Vagina (tissue), 2 donors: ENCODE measurements at regions of chr15 and their contacts with region 1.

Region 1: DNA sequence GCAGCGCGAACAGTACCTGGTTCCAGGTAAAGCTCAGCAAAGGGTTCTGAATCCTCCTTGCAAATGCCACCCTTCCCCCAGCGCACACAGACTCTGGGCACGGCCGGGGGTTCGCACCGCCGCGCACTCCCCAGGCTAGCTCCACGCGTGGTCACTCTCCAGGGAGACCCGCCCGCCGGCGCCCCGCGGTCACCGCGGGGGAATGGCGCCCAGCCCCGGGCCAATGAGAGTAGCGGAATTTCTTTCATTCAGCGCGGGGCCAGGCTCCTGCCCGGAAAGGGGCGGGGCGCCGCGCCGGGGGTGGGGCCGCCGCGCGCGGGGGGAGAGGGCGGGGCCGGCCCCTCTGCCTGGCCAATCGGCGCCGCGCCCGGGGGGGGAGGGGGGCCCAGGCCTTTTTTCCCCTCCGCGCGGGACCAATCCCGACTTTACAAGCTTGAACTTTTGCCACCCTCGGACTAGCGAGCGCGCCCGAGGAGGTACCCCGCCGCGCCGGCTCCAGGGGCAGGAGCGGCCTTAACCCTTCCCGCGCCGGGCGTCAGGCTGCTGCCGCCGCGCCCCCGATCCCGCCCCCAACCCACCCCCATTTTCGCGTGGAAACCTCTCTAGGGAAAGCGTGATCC is 1.1 kb upstream of the SMAD6 start:
- DNase-seq: peak in 1 of 2 donors; percentile 94
- H3K4me3 ChIP-seq: peak overlapping the region; percentile 53 to 84
- H3K27ac ChIP-seq: peak overlapping the region; percentile 82
- H3K4me1 ChIP-seq: peaks cover 33% of the 10 kb centered on the region
- H3K27me3 ChIP-seq: no peaks in the 10 kb centered on the region
- CTCF ChIP-seq: no peak
- POLR2A ChIP-seq: no peak

Region 2: DNA sequence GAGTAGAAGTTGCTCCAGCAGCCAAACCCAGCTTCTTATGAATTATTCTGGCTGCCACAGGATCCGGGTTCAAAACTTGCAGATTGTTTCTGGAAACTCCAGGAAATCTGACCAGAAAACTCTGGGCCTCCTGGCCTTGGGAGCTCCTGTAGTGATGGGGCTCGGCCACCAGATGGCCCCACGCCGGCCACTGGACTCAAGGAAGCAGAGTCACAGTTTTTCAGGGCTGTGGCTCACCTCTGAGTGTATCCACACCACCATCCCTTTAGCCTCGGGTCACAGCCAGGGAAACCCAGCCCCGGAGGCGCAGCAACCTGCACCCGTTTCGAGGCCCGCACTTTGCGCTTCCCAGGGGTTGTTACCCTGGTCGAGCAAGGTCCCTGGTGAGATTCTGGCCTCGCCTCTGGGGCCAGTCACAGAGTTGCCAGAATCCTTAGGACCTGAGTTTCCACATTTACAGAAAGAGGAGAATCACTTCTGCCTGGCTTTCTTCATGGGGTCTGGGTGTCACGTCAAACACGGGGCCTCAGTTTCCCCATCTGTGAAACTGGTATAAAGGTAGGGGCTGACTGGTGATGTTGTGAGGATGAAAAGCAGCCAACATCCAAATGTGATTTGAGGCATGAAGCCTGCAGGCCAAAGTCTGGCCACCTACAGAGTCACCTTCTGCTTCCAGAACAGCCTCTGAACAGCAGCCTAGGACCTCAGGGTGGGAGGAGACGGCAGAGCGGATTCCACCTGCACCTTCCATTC is 81.6 kb before region 1 on chr15:
- intact Hi-C with region 1: loop called (anchors 5 kb)
- DNase-seq: no peak
- H3K4me3 ChIP-seq: no peak overlapping the region
- H3K27ac ChIP-seq: peak overlapping the region; percentile 83
- H3K4me1 ChIP-seq: peaks cover 50% of the 10 kb centered on the region
- H3K27me3 ChIP-seq: no peaks in the 10 kb centered on the region
- CTCF ChIP-seq: peak; percentile 73 to 86 (median 80)
- POLR2A ChIP-seq: no peak

Region 3: GRCh38 chr15:66646308-66646707 is 54.6 kb before region 1 on chr15:
- intact Hi-C with region 1: no loop called
- DNase-seq: no peak
- H3K4me3 ChIP-seq: no peak overlapping the region
- H3K27ac ChIP-seq: no peak overlapping the region
- H3K4me1 ChIP-seq: peaks cover 23% of the 10 kb centered on the region
- H3K27me3 ChIP-seq: no peaks in the 10 kb centered on the region
- CTCF ChIP-seq: no peak
- POLR2A ChIP-seq: no peak

Region 4: DNA sequence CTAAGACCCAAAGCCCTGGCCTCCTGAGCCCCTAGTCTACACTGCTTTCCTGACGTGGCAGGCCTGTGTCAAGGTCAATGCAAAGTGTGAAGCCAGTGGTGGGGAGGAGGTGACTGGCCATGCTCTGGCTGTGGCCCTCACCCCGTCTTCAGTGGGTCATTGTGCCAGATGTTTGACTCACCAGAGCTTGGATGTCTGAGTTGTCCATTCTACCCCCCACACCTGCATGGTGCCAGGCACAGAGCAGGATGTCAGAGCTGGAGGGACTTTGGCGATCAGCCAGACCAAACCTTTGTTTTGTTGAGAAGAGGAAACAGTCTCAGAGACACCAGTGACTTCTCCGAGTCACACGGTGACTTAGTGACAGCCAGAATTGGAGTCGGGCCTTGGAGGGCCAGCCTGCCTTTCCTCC is 50.6 kb after region 1 on chr15:
- intact Hi-C with region 1: no loop called
- DNase-seq: no peak
- H3K4me3 ChIP-seq: no peak overlapping the region
- H3K27ac ChIP-seq: no peak overlapping the region
- H3K4me1 ChIP-seq: peaks cover 33% of the 10 kb centered on the region
- H3K27me3 ChIP-seq: no peaks in the 10 kb centered on the region
- CTCF ChIP-seq: no peak
- POLR2A ChIP-seq: no peak

Region 5: GRCh38 chr15:67188551-67189218 is 487.8 kb after region 1 on chr15:
- intact Hi-C with region 1: no loop called
- DNase-seq: peak in 1 of 2 donors; percentile 88
- H3K4me3 ChIP-seq: no peak overlapping the region
- H3K27ac ChIP-seq: peak overlapping the region; percentile 82
- H3K4me1 ChIP-seq: peaks cover 77% of the 10 kb centered on the region
- H3K27me3 ChIP-seq: no peaks in the 10 kb centered on the region
- CTCF ChIP-seq: no peak
- POLR2A ChIP-seq: no peak